HAP-1 (cell line): ENCODE measurements at regions of chr2 and their contacts with region 1.

Region 1: DNA sequence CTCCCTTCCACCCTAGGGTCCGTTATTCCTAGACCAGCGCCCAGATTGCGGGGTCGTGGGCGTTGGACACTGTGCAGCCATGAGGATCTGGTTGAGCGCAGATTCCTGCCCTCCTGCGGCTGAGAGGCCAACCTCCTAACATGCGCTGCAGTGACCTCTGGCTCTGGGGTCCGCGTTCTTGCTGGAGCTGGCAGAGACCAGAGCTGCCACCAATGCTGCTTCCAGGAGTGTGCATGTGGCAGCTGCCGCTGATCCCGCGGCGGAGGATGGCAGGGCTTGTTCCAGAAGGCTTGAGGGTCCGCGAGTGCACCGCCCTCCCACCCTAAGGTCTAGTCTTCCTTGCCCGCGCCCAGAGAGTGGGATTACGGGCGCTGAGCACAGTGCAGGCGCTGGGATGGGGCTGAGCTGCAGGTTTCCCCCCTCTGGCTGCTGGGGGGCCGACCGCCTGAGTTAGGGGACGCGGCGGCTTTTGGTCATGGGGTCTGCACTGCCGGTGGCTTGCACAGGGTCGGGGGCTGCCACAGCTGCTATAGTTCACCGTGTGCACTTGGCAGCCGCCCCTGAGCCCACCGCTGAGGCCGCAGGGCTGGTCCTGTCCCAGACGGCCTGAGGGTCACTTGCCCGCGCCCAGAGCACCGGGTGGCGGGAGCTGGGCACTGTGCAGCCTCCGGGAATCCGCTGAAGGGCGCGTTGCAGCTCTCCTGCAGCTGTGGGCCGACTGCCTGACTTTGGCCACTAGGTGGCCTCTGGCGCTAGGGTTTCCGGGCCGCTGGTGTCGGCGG is 145.9 kb downstream of the CCDC74A start:
- DNase-seq: peak; percentile 44 to 85
- H3K4me3 ChIP-seq: peak overlapping the region; percentile 22
- H3K4me1 ChIP-seq: no peaks in the 10 kb centered on the region; the same call in 1 of the 2 replicates
- H3K27me3 ChIP-seq: peaks cover 9% of the 10 kb centered on the region

Region 2: DNA sequence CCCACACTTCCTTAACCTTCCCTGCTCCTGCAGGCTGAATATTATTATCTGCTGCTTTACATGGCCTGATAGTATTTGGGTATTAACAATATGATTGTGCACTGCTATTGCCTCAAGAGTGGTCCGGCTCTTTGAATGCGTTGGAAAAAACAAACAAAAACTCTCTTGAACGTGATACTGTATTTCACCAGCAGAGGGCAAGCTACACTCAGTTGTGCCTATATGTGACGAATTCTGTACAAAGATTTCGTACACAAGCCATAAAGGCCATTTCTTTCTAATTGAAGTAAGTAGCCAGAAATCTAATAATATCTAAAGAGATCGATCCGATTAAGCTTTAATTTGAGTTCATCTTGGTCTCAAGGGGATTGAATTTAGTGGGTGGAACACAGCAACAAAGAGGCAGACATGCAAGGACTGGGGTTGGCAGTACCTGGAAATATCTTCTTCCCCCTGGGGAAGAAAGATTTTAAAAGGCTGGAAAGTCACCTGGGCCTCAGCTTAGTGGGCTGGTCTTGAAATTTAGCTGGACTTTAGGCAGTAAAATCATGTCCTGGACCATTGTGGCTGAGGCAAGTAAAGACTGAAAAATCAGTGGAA is 260.3 kb before region 1 on chr2:
- in situ Hi-C with region 1: loop called (anchors 10 kb)
- DNase-seq: peak; percentile 27 to 62
- H3K4me3 ChIP-seq: no peak overlapping the region
- H3K4me1 ChIP-seq: no peaks in the 10 kb centered on the region
- H3K27me3 ChIP-seq: no peaks in the 10 kb centered on the region; the same call in 1 of the 2 replicates